GM10248 (cell line): ENCODE measurements at regions of chr2 and their contacts with region 1.

Region 1: GRCh38 chr2:127479219-127479825 is 47.0 kb downstream of the IWS1 start:
- DNase-seq: peak; percentile 45
- CTCF ChIP-seq: peak; percentile 66

Region 2: DNA sequence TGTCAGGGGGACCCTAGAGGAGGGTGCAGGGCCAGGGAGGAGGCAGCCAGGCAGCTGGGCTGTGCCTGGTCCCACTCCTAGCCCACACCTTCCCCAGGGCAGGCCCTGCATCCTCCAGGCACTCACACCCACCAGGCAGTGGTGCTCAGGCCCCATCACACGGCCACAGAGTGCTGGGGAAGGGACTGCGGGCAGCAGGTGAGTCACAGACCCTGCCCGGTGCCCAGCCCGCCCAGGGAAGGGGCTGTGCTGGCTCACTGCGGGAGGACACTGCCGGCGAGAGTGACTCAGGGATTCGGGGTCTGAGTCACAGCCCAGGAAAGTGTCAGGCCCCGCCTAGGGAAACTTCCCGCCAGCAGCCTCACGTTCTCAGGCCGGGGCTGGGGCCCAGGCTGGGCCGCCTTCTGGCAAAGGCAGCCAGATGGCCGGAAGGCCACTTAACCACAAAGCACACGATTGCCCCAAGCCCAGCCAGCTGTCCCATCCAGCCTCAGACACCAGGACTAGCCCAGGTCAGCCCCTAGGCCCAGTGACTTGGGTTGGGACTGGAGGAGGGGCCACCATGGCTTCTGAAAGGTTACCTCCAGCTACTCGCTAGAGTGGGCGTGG is 414.6 kb before region 1 on chr2:
- CTCF ChIA-PET with region 1: interaction called, 10 read pairs
- POLR2A ChIA-PET with region 1: no interaction called
- DNase-seq: peak; percentile 87
- CTCF ChIP-seq: no peak

Region 3: DNA sequence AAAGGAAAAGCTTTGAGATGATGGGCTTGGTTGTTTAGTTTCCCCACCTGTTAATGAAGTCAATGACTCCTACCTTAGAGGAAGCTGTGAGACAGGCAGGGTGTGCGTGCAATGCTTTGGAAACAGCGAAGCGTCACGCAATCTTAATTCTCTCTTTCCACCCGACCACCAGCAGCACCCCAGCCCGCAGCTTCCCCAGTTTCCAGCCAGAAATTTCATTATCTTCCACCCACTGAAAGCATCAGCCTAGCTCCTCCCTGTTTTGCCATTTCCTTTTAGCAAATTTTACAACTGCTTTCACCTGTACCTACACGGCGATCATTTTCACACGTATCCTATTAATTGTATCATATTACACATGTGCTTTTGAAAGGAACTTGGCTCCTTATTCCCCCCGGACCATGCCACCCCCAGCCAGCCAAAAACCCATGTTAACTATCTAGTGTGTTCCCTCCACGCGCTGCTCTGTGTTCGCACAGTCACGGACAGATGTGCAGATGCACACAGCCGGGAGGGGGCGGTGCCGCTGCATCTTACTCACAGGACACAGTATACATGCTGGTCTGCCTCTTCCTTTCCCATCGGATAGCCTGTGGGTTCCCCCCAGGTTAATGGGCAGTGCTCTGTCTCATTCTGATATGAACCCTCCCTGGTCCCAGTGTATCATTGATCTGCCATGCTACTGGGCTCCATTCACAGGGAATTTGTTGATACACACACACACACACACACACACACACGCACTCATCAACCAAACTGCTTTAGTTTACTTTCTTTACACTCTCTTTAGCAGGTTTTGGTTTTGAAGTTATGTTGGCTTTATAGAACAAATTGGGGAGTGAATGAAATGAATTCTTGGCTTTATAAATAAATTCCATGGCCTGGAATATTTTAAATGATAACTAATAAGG is 281.6 kb before region 1 on chr2:
- CTCF ChIA-PET with region 1: interaction called, 29 read pairs
- POLR2A ChIA-PET with region 1: no interaction called
- DNase-seq: no peak
- CTCF ChIP-seq: peak; percentile 60

Region 4: DNA sequence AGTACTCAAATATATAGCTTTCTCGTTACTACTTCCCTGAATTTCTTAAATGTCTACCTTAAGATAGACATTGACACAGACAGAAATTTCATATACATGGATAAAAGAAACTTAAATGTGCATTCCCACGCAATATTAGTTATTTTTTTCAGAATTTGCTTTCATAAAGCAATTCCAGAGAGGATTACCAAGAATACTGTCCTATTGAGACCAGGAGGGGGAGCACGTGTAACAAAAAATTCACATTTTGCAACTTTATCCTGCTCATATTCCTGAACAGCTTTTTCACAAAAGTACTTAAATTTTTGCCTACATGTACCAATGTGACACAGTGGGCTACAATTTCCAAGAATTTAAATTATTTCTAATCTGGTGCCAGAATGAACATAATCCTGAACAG is 154.7 kb before region 1 on chr2:
- CTCF ChIA-PET with region 1: interaction called, 15 read pairs
- POLR2A ChIA-PET with region 1: no interaction called
- DNase-seq: no peak
- CTCF ChIP-seq: peak; percentile 34

Region 5: GRCh38 chr2:127490283-127490682 is 11.0 kb after region 1 on chr2:
- CTCF ChIA-PET with region 1: interaction called, 41 read pairs
- POLR2A ChIA-PET with region 1: no interaction called
- DNase-seq: no peak
- CTCF ChIP-seq: no peak